SK-N-SH (cell line): ENCODE measurements at regions of chr16 and their contacts with region 1.

Region 1: GRCh38 chr16:8621572-8622314 is at the start of gene METTL22:
- DNase-seq: peak; percentile 99
- H3K4me3 ChIP-seq: peak within 1 kb of the TSS; percentile 91 to 98
- H3K27ac ChIP-seq: peak within 1 kb of the TSS; percentile 59 to 70; a peak in 3 of 4 replicates
- H3K4me1 ChIP-seq: peaks cover 11 to 17% of the 10 kb centered on the region in 2 experiments; a peak in 3 of 4 replicates
- H3K27me3 ChIP-seq: peaks cover 3% of the 10 kb centered on the region; the same call in 1 of the 2 replicates
- CTCF ChIP-seq: no peak
- EP300 ChIP-seq: no peak
- RAD21 ChIP-seq: no peak
- polyA plus RNA-seq, gene METTL22: 38.3 and 45.3 TPM in 2 replicates

Region 2: GRCh38 chr16:8600144-8600775 is 21.5 kb before region 1 on chr16:
- CTCF ChIA-PET with region 1: no interaction called
- POLR2A ChIA-PET with region 1: no interaction called
- DNase-seq: no peak
- H3K4me3 ChIP-seq: no peak overlapping the region
- H3K27ac ChIP-seq: no peak overlapping the region
- H3K4me1 ChIP-seq: no peaks in the 10 kb centered on the region
- H3K27me3 ChIP-seq: no peaks in the 10 kb centered on the region
- CTCF ChIP-seq: no peak
- EP300 ChIP-seq: no peak
- RAD21 ChIP-seq: no peak

Region 3: GRCh38 chr16:8634991-8635736 is 13.4 kb after region 1 on chr16:
- CTCF ChIA-PET with region 1: interaction called, 10 read pairs
- POLR2A ChIA-PET with region 1: interaction called, 3 read pairs
- DNase-seq: peak; percentile 60
- H3K4me3 ChIP-seq: no peak overlapping the region; a peak in 1 of 4 replicates
- H3K27ac ChIP-seq: no peak overlapping the region; a peak in 1 of 4 replicates
- H3K4me1 ChIP-seq: peaks cover 0 to 5% of the 10 kb centered on the region in 2 experiments; a peak in 1 of 4 replicates
- H3K27me3 ChIP-seq: no peaks in the 10 kb centered on the region
- CTCF ChIP-seq: peak; percentile 70
- EP300 ChIP-seq: no peak
- RAD21 ChIP-seq: peak; percentile 61